PC-3 (cell line): ENCODE measurements at regions of chr3 and their contacts with region 1.

Region 1: GRCh38 chr3:62312201-62312600 is 61.1 kb downstream of the FEZF2 start:
- DNase-seq: no peak
- ATAC-seq: no peak
- H3K4me3 ChIP-seq: no peak overlapping the region
- H3K27ac ChIP-seq: no peak overlapping the region
- H3K4me1 ChIP-seq: no peaks in the 10 kb centered on the region
- H3K27me3 ChIP-seq: no peaks in the 10 kb centered on the region
- CTCF ChIP-seq: no peak

Region 2: DNA sequence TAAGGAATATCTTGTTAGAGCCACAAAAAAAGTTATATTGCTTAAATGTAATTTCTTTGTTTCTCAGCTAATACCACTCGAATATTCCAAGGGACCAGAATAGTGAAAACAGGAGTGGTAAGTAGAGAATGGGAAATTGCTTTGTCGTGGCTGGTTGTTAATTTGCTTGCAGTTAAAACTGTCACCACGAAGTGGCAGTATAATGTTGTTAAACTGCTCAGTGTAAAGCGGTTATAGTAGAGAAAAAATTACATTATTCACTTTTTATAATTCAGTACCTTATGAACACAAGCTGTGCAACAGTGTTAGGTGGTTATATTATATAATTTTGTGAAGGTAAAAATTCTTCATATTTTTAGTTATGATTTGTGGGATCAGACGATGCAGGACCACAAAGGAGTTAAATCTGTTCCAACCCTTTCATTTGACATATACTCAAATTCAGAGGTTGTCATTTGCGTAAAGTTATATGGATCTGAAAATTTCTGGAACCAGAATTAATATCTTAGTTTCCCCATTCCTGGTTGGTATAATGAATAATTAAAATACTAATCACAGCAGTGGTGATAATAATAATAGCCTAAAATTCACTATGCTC is 110.7 kb before region 1 on chr3:
- CTCF ChIA-PET with region 1: no interaction called
- POLR2A ChIA-PET with region 1: no interaction called
- intact Hi-C with region 1: loop called (anchors 1 kb)
- DNase-seq: peak; percentile 56
- ATAC-seq: peak; percentile 81
- H3K4me3 ChIP-seq: no peak overlapping the region
- H3K27ac ChIP-seq: no peak overlapping the region
- H3K4me1 ChIP-seq: no peaks in the 10 kb centered on the region
- H3K27me3 ChIP-seq: no peaks in the 10 kb centered on the region
- CTCF ChIP-seq: peak; percentile 72